ENCODE measurements at regions of chr4 and their contacts with region 1.

Region 1: GRCh38 chr4:184287697-184288255 is 70.1 kb upstream of the ENPP6 start:
- DNase-seq: no peak
- H3K4me3 ChIP-seq: no peak overlapping the region
- H3K27ac ChIP-seq: peak overlapping the region in 1 of 2 donors; percentile 57
- H3K4me1 ChIP-seq: peaks cover 8% of the 10 kb centered on the region
- H3K27me3 ChIP-seq: no peaks in the 10 kb centered on the region
- CTCF ChIP-seq: peak in 1 of 3 donors; percentile 25
- EP300 ChIP-seq: no peak
- POLR2A ChIP-seq: no peak

Region 2: DNA sequence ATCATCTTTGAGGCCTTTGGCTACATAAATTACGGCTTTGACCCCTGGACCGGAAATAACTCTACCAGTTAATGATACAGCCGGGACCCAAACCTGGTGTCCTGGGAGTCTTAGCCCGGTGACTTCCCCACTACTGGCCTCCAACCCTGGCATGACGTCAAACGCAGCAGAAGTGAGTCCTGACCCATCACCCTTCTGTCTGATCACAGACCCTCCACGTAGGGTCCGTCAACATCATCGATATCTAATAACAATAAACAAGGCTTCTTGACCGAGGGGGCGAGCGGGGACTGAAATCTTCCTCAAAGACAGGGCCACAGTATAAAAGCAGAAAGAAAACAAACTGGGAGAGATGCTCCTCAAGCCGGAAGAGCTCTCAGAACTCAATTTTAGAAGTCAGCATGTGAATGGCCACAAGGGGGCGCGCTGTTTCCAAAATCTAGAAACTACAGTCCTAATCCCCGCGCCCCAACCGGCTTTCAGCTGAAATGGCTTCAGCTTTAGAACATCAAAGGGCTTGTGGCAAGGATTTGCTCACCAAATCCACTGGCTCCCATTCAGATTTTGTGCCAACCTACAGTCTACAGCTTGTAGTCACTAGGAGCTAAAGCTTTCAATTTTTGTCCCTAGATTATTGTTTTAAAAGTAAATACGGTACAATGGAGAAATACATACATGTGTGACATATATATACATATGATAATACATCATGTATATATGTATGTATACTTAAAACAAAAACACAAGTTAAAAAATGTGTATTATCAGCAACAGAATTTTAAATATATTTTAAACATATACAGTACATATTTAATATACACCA is 23.7 kb before region 1 on chr4:
- intact Hi-C with region 1: loop called in 1 of 4 experiments (anchors 2 kb)
- DNase-seq: peak; percentile 87 to 96 (median 95)
- H3K4me3 ChIP-seq: no peak overlapping the region
- H3K27ac ChIP-seq: no peak overlapping the region
- H3K4me1 ChIP-seq: peaks cover 1% of the 10 kb centered on the region
- H3K27me3 ChIP-seq: no peaks in the 10 kb centered on the region
- CTCF ChIP-seq: peak; percentile 89 to 95 (median 93)
- EP300 ChIP-seq: no peak
- POLR2A ChIP-seq: no peak

Region 3: GRCh38 chr4:186037692-186038658 is 1750.2 kb after region 1 on chr4:
- intact Hi-C with region 1: no loop called
- DNase-seq: peak in 3 of 5 donors; percentile 36 to 70 (median 48)
- H3K4me3 ChIP-seq: no peak overlapping the region
- H3K27ac ChIP-seq: no peak overlapping the region
- H3K4me1 ChIP-seq: peaks cover 5% of the 10 kb centered on the region
- H3K27me3 ChIP-seq: no peaks in the 10 kb centered on the region
- CTCF ChIP-seq: peak; percentile 69 to 91 (median 85)
- EP300 ChIP-seq: no peak
- POLR2A ChIP-seq: no peak